ENCODE measurements at regions of chr2 and their contacts with region 1.

Region 1: GRCh38 chr2:84029903-84030536 is 429.1 kb downstream of the SUCLG1 start:
- DNase-seq: no peak
- ATAC-seq: no peak

Region 2: GRCh38 chr2:83565166-83565565 is 464.9 kb before region 1 on chr2:
- intact Hi-C with region 1: no loop called
- DNase-seq: no peak
- ATAC-seq: no peak

Region 3: DNA sequence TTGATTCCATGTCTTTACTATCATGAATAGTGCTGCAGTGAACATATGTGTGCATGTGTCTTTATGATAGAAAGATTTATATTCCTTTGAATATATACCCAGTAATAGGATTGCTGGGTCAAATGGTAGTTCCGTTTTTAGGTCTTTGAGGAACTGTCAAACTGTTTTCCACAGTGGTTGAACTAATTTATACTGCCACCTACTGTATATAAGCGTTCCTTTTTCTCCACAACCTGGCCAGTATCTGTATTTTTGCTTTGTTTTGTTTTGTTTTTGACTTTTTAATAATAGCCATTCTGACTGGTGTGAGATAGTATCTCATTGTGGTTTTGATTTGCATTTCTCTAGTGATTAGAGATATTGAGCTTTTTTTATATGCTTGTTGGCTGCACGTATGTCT is 212.5 kb before region 1 on chr2:
- intact Hi-C with region 1: no loop called
- DNase-seq: no peak
- ATAC-seq: peak; percentile 44

Region 4: DNA sequence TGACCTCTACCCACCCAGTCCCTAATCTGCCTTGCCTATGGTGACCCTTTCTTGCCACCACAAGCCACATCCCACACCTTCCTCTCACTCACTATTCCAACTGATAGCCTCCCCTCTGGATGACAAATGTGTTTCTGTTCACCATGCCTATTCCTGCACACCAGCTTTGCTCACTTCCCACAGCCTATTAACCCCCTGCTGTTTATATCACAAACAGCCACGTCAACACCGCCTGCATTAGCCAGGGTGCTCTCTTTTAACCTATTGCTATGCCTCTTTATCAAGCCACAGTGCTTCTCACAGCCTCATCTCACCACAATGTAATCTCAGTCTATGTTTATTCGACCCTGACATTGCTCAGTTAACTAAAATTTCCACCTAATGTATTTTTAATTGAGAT is 157.2 kb after region 1 on chr2:
- intact Hi-C with region 1: no loop called
- DNase-seq: no peak
- ATAC-seq: no peak

Region 5: GRCh38 chr2:84302513-84303412 is 272.7 kb after region 1 on chr2:
- intact Hi-C with region 1: loop called in 1 of 2 experiments (anchors 5 kb)
- DNase-seq: peak in 1 of 2 donors; percentile 46
- ATAC-seq: peak; percentile 98

Region 6: DNA sequence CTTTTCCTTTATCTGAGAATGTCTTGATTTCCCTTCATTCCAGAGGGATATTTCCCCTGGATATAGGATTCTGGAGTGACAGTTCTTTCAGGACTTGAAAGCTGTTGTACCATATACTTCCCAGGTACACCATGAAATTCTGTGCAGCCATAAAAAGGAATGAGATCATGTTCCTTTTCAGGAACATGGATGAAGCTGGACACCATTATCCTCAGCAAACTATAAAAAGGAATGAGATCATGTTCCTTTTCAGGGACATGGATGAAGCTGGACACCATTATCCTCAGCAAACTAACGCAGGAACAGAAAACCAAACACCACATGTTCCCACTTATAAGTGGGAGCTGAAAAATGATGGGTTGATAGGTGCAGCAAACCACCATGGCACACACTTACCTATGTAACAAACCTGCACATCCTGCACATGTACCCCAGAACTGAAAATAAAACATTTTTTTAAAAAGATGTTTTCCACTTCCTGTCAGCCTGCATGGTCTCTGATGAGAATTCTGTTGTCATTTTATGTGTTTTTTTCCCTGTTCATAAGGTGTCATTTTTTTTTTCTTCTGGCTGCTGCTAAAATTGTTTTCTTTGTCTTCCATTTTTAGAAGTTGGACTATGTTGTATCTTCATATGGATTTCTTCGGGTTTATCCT is 619.6 kb after region 1 on chr2:
- intact Hi-C with region 1: no loop called
- DNase-seq: no peak
- ATAC-seq: peak; percentile 24